Cardiac septum (tissue), 1 donor: ENCODE measurements at regions of chr1 and their contacts with region 1.

Region 1: DNA sequence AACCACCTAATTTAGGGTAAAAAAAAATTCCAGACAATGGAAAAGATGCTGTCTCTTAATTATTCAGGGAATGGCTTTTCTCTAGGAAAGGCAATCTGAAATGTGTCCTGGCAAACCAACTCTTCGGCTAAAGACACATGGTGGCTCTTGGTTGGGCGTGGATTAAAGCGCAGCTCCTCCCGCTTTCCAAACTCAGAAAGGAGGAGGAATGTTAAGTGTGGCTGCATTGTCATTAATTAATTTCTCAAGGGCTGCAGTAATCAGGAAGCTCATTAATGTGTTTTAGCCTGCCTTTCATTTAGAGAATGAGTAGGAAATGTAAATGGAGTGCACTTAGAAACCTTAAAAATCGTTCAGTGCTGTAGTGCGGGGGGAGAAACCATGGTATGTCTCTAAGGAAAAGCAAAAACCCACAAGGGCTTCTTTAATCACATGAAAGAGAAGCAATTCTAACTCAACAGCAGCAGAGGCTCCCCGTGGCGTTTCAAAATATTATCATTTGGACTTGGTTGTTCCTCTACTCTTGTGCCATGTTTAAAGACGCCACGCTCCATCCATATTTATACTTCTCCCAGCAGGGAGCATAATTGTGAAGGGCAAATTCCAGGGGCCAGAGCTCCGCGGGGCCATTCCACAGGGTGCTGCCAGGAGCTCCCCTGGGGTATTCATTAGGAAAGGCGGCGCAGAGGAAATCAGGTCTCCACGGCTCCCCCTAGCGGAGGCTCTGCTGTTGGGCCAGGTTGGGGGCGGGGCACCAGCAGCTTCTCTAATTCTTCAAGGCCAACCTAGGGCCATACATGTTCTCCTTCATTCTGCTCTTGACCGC is 91.9 kb upstream of the SSX2IP start:
- DNase-seq: no peak

Region 2: DNA sequence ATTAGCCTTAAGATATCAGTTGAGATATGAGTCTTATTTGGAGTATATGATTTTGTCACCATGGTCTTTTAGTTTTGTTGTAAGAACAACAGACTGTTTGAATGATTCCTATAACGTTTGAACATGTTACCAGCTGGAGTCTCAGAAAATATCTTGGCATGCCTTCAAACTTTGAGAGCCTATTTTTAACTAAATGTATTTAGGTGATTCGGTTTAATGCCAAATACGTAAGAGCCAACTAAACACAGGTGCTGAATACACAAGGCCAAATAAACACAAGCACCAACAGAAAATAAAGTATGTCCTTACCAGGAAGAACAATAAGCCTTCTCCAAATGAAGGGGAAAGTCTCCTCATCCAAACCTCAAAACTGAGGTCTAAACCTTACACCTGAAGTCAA is 589.5 kb before region 1 on chr1:
- intact Hi-C with region 1: no loop called
- DNase-seq: no peak

Region 3: GRCh38 chr1:84653130-84653677 is 129.0 kb before region 1 on chr1:
- intact Hi-C with region 1: no loop called
- DNase-seq: no peak

Region 4: DNA sequence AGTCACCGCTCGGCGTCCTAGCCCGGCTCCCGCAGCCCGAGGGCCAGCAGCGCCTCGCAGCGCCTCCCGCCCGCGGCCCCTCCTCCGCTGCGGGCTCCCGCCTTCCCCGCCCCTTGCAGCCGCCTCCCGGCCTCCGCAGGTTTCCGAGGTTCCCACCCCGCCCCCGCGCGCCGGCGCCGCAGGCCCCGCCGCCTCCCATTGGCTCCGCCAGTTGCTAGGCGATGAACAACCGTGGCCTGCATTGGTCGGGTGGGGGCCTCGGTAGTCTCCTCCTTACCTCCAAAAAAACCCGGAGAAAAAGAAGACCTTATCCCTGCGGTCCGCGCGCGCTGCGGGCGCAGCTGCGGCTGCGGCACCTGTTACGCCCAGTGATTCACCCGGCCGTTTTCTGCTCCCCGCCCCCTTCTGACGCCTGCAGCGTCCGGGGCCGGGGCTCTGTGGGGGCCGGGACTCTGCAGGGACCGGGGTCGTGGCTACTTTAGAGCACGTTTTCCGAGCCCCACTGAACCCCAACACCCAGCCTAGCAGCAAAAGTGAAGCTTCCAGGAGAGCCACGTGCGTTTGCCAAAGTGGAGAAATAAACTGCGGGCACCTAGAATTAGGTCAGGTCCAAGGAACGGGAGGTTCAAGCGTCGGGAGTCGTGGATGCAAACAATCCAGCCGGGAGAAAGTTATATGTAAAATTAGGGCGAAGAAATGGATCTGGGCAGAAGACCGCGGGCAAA is 91.6 kb before region 1 on chr1 and contains the start of gene SSX2IP:
- intact Hi-C with region 1: no loop called
- DNase-seq: peak; percentile 98
- total RNA-seq, gene SSX2IP: 12.0 TPM

Region 5: DNA sequence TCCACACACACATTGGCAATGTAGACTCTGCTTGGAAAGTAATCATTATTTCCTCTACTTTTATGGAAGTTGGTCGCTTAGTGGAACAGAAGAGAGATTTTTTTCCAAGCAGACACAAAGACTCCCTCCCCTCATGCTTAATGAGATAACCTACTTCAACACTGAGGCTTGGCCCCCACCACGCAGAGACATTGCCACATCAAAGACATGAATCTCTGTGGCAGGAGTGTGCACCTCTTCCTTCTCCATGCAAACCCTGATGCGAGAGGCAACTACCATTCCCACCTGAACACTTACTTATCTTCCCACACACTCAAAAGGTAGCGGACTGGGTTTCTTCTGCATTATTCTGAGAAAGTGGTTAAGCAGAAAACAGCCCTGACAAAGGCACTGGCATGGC is 148.2 kb after region 1 on chr1:
- intact Hi-C with region 1: loop called (anchors 5 kb)
- DNase-seq: no peak